ENCODE measurements at regions of chr2 and their contacts with region 1.

Region 1: DNA sequence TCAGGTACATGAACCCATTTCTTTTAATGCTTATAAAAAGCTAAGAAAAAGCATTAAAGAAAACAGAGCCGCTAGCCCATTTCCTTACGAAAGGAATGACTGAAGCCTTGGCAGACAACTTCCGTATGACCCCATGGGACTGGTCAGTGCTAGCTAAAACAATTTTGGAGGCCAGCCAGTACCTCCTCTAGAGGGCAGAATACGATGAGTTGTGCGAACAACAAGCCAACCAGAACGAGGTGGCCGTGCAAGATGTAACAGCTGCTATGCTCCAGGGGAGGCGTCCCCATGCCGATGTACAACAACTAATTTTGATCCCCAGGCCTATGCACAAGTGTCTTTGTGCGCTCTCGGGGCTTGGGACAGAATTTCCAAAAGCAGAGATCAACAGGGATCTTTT is 16.7 kb downstream of the MAP3K2 start:
- DNase-seq: no peak
- H3K4me3 ChIP-seq: no peak overlapping the region
- H3K27ac ChIP-seq: no peak overlapping the region
- H3K4me1 ChIP-seq: no peaks in the 10 kb centered on the region
- H3K27me3 ChIP-seq: no peaks in the 10 kb centered on the region
- CTCF ChIP-seq: no peak
- POLR2A ChIP-seq: no peak

Region 2: DNA sequence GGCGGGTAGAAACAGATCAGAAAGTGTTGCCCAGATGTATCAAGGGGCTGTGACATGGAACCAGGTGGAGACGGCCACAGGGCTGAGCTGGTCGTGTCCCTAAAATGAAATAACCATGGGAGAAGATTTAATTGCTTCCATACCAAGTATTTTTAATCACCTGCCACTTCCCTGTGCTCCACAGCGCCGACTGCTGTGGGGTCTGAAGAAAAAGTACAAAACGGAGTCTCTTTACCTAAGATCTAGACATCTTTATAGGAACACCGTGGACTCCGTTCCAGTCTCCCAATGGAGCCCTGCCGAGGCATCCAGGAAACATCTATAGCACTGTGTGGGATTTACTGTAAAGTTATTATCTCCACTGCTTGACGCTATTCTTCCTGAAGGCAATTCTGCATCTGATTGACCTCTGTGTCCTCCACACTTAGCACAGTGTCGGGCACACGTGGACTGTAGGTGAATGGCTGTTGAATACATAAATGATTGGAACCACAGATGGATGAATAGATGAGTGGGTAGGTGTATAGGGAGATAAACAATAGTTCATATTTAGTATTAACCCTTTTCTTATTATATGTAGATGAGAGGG is 736.7 kb before region 1 on chr2:
- intact Hi-C with region 1: no loop called
- DNase-seq: no peak
- H3K4me3 ChIP-seq: no peak overlapping the region
- H3K27ac ChIP-seq: no peak overlapping the region
- H3K4me1 ChIP-seq: no peaks in the 10 kb centered on the region
- H3K27me3 ChIP-seq: no peaks in the 10 kb centered on the region
- CTCF ChIP-seq: no peak
- POLR2A ChIP-seq: no peak

Region 3: DNA sequence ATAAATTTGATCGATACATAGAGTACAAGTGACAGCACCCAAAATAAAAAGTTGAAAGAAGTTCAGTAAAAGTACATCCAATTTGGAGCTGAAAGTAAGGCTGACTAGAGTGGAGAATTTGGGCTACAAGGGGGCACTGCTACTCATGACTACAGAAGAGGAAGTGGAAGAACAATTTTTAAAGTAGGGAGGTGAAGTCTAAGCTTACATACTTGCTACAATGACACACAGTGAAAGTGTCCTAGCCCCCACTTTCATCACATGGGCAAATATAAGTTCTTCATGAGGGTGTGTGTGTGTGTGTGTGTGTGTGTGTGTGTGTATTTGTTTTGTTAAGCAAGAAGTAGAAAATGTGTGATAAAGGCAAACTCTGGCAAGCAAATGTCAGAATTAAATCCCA is 28.9 kb before region 1 on chr2:
- intact Hi-C with region 1: loop called (anchors 5 kb)
- DNase-seq: no peak
- H3K4me3 ChIP-seq: no peak overlapping the region
- H3K27ac ChIP-seq: no peak overlapping the region
- H3K4me1 ChIP-seq: no peaks in the 10 kb centered on the region
- H3K27me3 ChIP-seq: no peaks in the 10 kb centered on the region
- CTCF ChIP-seq: no peak
- POLR2A ChIP-seq: no peak